Lower leg skin (tissue), 4 donors: ENCODE measurements at regions of chr10 and their contacts with region 1.

Region 1: DNA sequence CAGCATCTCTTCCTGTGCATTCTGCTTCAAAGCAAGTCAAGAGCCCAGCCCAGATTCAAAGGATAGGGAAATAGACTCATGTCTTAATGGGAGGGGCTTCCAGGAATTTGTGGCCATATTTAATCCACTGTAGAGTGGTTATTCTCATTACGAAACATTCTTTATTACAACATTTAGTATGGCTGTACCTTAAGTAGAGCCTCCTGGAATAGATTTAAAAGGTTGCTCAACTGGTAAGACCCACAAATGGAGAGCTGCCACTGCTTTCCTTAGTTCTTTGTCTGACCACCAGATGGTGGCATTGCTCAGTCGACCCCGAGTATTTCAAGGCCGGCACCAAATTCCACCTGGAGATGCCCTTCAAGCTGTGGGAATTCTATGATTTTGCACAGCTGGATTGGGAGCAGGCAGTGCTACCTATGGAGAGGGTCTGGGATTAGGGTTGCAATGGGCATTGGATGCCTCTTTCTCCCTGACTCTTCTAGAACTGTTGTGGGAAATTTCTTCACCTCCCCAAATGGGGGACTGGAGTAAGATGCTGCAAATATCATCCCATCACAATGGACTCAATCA is 102.2 kb downstream of the RBM20 start:
- DNase-seq: peak in 1 of 2 donors; percentile 72
- H3K4me3 ChIP-seq: no peak overlapping the region
- CTCF ChIP-seq: peak in 1 of 3 donors; percentile 48
- POLR2A ChIP-seq: no peak

Region 2: GRCh38 chr10:110893559-110894179 is 147.3 kb after region 1 on chr10:
- intact Hi-C with region 1: loop called (anchors 5 kb)
- DNase-seq: no peak
- H3K4me3 ChIP-seq: no peak overlapping the region
- CTCF ChIP-seq: peak in 1 of 3 donors; percentile 47
- POLR2A ChIP-seq: no peak